GM10248 (cell line): ENCODE measurements at regions of chr7 and their contacts with region 1.

Region 1: GRCh38 chr7:43108255-43109011 is 4.0 kb upstream of the HECW1 start:
- DNase-seq: peak; percentile 60
- CTCF ChIP-seq: peak; percentile 85

Region 2: GRCh38 chr7:42770106-42770505 is 338.3 kb before region 1 on chr7:
- CTCF ChIA-PET with region 1: no interaction called
- POLR2A ChIA-PET with region 1: no interaction called
- DNase-seq: no peak
- CTCF ChIP-seq: no peak

Region 3: GRCh38 chr7:42940985-42941847 is 167.2 kb before region 1 on chr7:
- CTCF ChIA-PET with region 1: interaction called, 40 read pairs
- POLR2A ChIA-PET with region 1: interaction called, 6 read pairs
- DNase-seq: peak; percentile 62
- CTCF ChIP-seq: peak; percentile 86

Region 4: DNA sequence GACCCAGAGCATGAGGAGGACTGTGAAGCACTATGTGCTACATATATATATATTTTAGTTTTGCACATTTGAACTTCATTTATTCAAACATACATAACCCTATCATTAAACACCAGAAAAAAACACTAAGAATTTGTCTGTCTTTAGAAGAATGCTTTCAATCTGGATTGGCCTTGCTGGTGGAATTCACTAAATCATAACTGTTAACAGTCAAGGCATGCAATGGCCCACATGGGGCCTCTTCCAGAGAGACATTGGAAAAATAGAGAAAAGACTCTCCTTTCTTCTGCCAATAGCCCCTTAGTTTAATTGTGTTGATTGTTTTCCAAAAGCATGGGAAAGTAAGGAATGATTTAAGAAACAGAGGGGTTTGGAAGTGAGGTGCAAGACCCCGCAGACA is 98.4 kb before region 1 on chr7:
- CTCF ChIA-PET with region 1: no interaction called
- POLR2A ChIA-PET with region 1: no interaction called
- DNase-seq: no peak
- CTCF ChIP-seq: no peak

Region 5: GRCh38 chr7:43071604-43072003 is 36.8 kb before region 1 on chr7:
- CTCF ChIA-PET with region 1: interaction called, 18 read pairs
- POLR2A ChIA-PET with region 1: no interaction called
- DNase-seq: no peak
- CTCF ChIP-seq: peak; percentile 38

Region 6: GRCh38 chr7:43085992-43086391 is 22.4 kb before region 1 on chr7:
- CTCF ChIA-PET with region 1: interaction called, 15 read pairs
- POLR2A ChIA-PET with region 1: no interaction called
- DNase-seq: no peak
- CTCF ChIP-seq: no peak

Region 7: GRCh38 chr7:43096875-43097274 is 11.6 kb before region 1 on chr7:
- CTCF ChIA-PET with region 1: interaction called, 19 read pairs
- POLR2A ChIA-PET with region 1: no interaction called
- DNase-seq: no peak
- CTCF ChIP-seq: no peak

Region 8: DNA sequence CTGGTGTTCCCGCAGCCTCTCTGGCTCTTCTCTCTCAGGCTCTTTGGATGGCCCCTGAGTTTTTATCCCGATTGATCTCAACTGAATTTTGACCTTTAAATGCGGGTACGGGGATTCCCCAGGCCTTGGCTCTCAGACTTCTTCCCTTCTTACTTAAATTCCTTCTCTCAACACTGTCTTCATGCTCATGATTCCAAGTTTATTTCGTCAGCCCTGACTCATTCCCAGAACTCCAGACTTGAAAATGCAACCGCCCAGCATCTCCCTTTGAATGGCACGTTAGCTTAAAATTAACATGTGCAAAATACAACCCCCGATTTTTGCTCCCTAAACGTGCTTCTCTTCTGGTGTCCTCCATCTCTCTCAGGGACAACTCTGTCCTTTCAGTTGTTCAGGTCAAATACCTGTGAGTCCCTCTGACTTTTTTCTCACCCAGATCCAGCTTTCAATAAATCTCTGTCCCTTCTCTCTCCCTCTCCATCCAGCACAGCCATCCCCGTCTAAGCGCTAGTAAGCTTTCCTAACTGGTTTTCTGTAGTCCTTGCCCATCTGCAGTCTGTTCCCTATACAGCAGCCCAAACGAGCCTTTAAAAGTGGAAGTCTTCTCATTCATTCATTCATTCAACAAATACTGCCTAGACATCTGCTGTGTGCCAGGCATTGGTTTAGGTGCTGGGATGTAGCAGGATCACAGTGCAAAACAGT is 11.1 kb after region 1 on chr7:
- CTCF ChIA-PET with region 1: interaction called, 24 read pairs
- POLR2A ChIA-PET with region 1: no interaction called
- DNase-seq: no peak
- CTCF ChIP-seq: no peak